A673 (cell line): ENCODE measurements at regions of chr3 and their contacts with region 1.

Region 1: GRCh38 chr3:113736548-113737089 is 9.4 kb downstream of the NAA50 start:
- DNase-seq: peak; percentile 79
- H3K4me3 ChIP-seq: no peak overlapping the region
- H3K27ac ChIP-seq: peak overlapping the region; percentile 22
- H3K4me1 ChIP-seq: peaks cover 33% of the 10 kb centered on the region
- H3K27me3 ChIP-seq: no peaks in the 10 kb centered on the region
- CTCF ChIP-seq: peak; percentile 70

Region 2: DNA sequence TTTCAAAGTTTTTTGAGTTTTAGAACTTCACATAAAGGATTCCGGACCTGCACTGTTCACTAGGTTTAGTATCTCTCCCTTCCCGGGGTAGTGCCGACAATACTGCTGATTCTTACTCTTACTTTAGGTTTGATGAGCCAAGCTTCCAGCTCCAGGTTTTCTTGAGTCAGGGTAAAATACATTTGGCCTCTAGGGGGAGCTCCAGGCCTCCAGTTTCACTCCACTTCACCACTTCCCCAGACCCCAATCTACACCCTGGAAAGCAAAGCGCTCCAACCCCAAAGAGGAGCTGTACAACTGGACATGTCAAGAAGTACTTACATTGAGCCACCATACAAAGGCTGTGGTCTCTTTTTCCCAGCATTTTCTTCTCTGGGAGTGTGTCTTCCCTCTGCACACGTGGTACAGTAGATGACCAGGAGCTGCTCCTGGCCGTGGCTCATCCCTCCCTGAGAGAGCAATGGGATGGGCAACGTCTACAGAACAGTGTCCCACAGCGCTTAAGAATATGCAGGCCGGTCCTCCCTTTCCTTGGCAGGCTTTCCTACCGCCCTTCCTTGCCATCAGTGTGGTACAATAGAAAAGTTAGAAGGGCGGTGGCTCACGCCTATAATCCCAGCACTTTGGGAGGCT is 1001.8 kb before region 1 on chr3:
- CTCF ChIA-PET with region 1: no interaction called
- POLR2A ChIA-PET with region 1: no interaction called
- intact Hi-C with region 1: no loop called
- DNase-seq: peak; percentile 80
- H3K4me3 ChIP-seq: no peak overlapping the region
- H3K27ac ChIP-seq: no peak overlapping the region
- H3K4me1 ChIP-seq: no peaks in the 10 kb centered on the region
- H3K27me3 ChIP-seq: peaks cover 6% of the 10 kb centered on the region
- CTCF ChIP-seq: peak; percentile 81

Region 3: DNA sequence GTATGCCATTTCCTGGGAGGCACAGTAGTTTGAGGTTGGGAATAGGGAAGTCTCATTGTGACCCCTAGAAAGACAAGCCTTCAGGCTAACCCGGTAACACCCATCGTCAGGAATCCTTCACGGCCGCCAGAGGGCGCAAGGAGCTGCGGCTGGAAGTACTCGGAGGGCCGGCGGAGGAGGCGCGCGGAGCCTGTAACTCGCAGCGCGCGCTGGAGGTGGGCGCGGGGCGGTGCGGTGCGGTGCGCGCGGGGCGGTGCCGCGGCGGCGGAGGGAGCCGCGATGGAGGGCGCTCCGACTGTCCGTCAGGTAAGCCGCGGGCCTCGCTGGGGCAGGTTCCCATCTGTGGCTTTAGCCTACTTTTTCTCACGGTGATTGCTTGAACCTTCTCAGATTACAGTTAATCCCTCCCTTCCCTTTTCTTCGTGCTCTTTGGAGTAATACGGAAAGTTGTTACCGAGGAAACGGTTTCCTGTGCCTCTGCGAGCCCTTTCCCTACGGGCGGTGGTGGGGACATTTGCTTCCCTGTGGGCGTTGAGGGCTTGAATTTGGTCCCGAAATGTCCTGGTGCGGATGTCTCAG is 102.1 kb after region 1 on chr3 and contains the start of gene GRAMD1C:
- CTCF ChIA-PET with region 1: interaction called, 4 read pairs
- POLR2A ChIA-PET with region 1: no interaction called
- intact Hi-C with region 1: loop called (anchors 2 kb)
- DNase-seq: peak; percentile 94
- H3K4me3 ChIP-seq: peak within 1 kb of the TSS; percentile 56
- H3K27ac ChIP-seq: peak within 1 kb of the TSS; percentile 41
- H3K4me1 ChIP-seq: peaks cover 3% of the 10 kb centered on the region
- H3K27me3 ChIP-seq: no peaks in the 10 kb centered on the region
- CTCF ChIP-seq: peak; percentile 88
- total RNA-seq, gene GRAMD1C: 3.1 and 4.5 TPM in 2 replicates